Activated naive CD4-positive, alpha-beta T cell treated with anti-CD3 and anti-CD28 coated beads for 36 hours (primary cell): ENCODE measurements at regions of chr7 and their contacts with region 1.

Region 1: DNA sequence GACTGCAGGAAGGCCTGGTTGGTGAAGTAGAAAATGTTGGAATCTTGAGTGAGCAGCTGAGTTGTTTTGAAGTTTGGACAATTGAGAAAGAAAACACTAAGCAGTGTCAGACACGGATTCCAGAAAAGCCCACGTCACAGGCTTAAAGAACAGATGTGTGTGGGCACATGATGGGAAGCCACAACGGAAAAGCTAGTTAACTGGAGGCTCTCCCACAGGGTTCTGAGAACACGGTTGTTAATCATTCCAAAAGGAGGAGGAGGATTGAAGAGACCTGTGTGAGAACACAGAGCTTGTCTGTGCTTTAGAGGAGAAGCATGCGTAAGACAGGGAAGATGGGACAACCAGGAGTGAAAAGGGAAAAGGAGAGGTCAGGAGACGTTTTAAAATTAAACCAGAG is 42.6 kb downstream of the SHH start:
- DNase-seq: no peak
- H3K4me3 Mint-ChIP-seq: no peak overlapping the region
- H3K27ac Mint-ChIP-seq: no peak overlapping the region
- H3K4me1 Mint-ChIP-seq: peaks cover 3% of the 10 kb centered on the region
- H3K27me3 Mint-ChIP-seq: no peaks in the 10 kb centered on the region

Region 2: GRCh38 chr7:155729834-155730233 is 39.9 kb before region 1 on chr7:
- CTCF ChIA-PET with region 1: interaction called, 12 read pairs
- intact Hi-C with region 1: loop called (anchors 1 kb)
- DNase-seq: no peak
- H3K4me3 Mint-ChIP-seq: no peak overlapping the region
- H3K27ac Mint-ChIP-seq: no peak overlapping the region
- H3K4me1 Mint-ChIP-seq: peaks cover 52% of the 10 kb centered on the region
- H3K27me3 Mint-ChIP-seq: no peaks in the 10 kb centered on the region